Left ventricle myocardium superior (tissue), 1 donor: ENCODE measurements at regions of chr20 and their contacts with region 1.

Region 1: GRCh38 chr20:4082406-4083097 is 67.2 kb upstream of the RNF24 start:
- DNase-seq: peak; percentile 41
- ATAC-seq: peak; percentile 59

Region 2: DNA sequence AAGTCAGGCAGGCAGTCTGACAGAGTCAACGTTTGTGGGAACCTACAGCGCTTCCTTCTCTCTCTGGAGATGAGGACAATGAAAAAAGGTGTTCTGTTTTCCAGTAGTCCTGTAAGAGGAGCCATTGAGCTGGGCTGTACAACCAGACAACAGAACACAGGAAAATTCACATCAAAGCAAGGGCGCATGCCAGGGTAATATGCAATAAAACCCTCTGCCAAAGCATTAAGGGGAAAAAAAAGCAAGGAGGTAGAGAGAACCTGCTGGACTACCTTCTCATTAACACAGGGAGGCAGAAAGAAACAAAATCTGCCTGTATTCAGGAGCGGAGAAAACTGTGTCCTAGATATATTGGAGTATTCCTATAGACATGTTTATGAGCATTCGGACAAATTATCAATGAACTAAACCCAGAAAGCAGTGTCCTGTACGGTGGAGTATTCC is 68.5 kb before region 1 on chr20:
- intact Hi-C with region 1: loop called (anchors 5 kb)
- DNase-seq: no peak
- ATAC-seq: peak; percentile 51